ENCODE measurements at regions of chr19 and their contacts with region 1.

Region 1: DNA sequence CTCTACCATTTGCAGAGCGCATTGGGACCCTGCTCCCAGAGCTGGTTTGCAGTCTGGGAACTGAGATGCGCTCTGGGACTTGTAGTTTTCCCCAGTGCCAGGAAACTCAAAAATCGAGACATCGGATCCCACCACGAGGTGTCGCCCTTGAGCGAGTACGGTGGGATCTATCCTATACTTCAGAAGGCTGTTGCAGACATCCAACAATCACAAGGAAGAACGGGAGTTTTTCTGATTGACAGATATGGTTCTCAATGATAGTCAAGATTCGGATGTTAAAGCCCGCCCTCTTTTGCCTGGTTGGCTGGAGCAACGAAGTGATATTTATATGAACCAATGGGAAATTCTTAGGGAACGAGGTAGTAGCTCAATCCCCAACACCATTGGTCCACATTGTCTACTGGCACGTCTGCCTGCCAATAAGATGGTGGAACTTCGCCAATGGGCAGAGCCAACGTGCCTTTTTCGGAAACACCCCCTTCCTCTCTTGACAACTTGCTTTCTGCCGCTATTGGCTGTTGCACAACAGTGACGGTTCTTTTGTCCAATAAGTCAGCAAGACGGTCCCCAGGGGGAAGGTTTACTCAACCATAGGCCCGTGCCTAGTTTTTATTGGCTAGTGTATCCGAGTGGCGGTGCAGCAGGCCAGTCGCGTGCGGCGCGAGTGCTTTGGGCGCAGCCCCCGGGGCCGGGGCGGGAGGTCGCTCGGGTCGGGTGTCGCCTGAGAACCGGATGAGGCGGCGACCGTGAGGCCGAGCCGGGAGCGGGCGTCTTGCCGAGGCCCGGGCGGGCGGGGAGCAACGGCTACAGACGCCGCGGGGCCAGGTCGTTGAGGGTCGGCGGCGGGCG is at the start of gene DNM2:
- DNase-seq: peak; percentile 92 to 100 (median 97)
- ATAC-seq: peak; percentile 84
- H3K4me3 ChIP-seq: peak within 1 kb of the TSS; percentile 79 to 90
- H3K4me3 Mint-ChIP-seq: peak within 1 kb of the TSS; percentile 95
- H3K27ac ChIP-seq: peak within 1 kb of the TSS; percentile 71 to 81
- H3K27ac Mint-ChIP-seq: peak within 1 kb of the TSS; percentile 92
- H3K4me1 ChIP-seq: peaks cover 38% of the 10 kb centered on the region
- H3K4me1 Mint-ChIP-seq: peaks cover 42% of the 10 kb centered on the region
- H3K27me3 ChIP-seq: no peaks in the 10 kb centered on the region
- H3K27me3 Mint-ChIP-seq: no peaks in the 10 kb centered on the region
- CTCF ChIP-seq: peak; percentile 64
- total RNA-seq, gene DNM2: 309 to 337 TPM

Region 2: GRCh38 chr19:10653715-10654492 is 63.7 kb before region 1 on chr19 and contains the start of gene ILF3:
- CTCF ChIA-PET with region 1: no interaction called
- POLR2A ChIA-PET with region 1: interaction called, 3 read pairs
- intact Hi-C with region 1: loop called (anchors 1 kb)
- DNase-seq: peak; percentile 100
- ATAC-seq: peak; percentile 77
- H3K4me3 ChIP-seq: peak within 1 kb of the TSS; percentile 83
- H3K4me3 Mint-ChIP-seq: peak within 1 kb of the TSS; percentile 94
- H3K27ac ChIP-seq: peak within 1 kb of the TSS; percentile 98 to 99
- H3K27ac Mint-ChIP-seq: peak within 1 kb of the TSS; percentile 98
- H3K4me1 ChIP-seq: peaks cover 41% of the 10 kb centered on the region
- H3K4me1 Mint-ChIP-seq: peaks cover 44% of the 10 kb centered on the region
- H3K27me3 ChIP-seq: no peaks in the 10 kb centered on the region
- H3K27me3 Mint-ChIP-seq: no peaks in the 10 kb centered on the region
- CTCF ChIP-seq: no peak
- total RNA-seq, gene ILF3: 604 to 613 TPM

Region 3: DNA sequence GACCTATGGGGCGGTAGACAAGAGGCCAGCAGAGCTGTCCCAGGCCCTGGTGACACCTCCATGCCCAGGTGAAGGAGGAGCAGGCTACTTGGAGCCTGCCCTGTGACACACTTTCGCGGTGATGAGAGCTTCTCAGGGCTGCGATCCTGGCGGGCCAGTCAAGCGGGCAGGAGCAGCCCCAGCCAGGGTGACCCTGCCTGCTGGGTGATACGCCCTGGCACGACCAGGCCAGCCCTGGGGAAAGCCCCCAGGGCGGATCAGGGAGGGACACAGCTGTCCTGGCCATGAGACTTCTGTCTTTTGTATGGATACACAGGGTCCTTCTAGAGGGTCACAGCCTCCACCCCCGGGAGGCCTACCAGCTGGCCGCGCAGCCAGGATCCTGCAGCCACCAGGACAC is 13.3 kb after region 1 on chr19:
- CTCF ChIA-PET with region 1: interaction called, 22 read pairs
- POLR2A ChIA-PET with region 1: interaction called, 13 read pairs
- intact Hi-C with region 1: loop called (anchors 1 kb)
- DNase-seq: peak in 2 of 9 experiments; percentile 37 to 46
- ATAC-seq: no peak
- H3K4me3 ChIP-seq: no peak overlapping the region
- H3K4me3 Mint-ChIP-seq: peak overlapping the region; percentile 12
- H3K27ac ChIP-seq: peak overlapping the region; percentile 32 to 73
- H3K27ac Mint-ChIP-seq: peak overlapping the region; percentile 98
- H3K4me1 ChIP-seq: peaks cover 35% of the 10 kb centered on the region
- H3K4me1 Mint-ChIP-seq: peaks cover 56% of the 10 kb centered on the region
- H3K27me3 ChIP-seq: no peaks in the 10 kb centered on the region
- H3K27me3 Mint-ChIP-seq: no peaks in the 10 kb centered on the region
- CTCF ChIP-seq: no peak

Region 4: DNA sequence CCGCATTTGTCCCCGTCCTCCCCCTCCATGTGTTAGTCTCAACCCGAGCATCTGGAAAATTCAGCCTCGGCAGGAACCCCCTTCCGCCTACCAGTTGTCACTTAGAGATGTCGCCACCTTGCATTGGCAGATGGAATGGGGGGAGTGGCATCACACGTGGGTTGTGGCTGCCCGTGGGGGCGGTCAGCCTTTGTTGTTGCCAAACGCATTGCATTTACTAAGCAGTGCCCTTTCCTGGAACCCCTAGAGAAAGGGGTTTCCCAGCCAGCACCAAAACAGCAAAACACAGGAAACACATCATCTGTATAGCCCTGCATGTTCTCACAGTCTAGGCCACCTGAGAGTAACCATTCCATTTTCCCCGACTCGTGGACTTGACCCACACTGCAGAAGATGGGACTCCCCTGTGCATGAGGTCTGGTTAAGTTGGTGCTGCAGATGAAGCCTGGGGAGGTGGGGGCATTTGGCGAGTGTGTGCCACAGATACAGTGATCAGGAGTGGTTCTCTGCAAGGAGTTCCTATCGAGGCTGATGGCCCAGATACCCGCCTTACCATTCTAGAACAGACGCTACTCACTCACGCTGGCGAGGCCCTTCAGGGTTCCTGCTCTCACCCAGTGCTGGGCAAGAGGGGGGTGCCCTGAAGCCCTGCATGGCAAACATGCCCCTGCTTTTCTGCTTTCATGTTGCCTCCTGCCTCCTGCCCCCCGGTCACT is 80.1 kb after region 1 on chr19:
- CTCF ChIA-PET with region 1: interaction called, 6 read pairs
- POLR2A ChIA-PET with region 1: interaction called, 7 read pairs
- intact Hi-C with region 1: loop called (anchors 1 kb)
- DNase-seq: peak; percentile 64 to 97 (median 80)
- ATAC-seq: peak; percentile 81
- H3K4me3 ChIP-seq: peak overlapping the region; percentile 31 to 42
- H3K4me3 Mint-ChIP-seq: peak overlapping the region; percentile 76
- H3K27ac ChIP-seq: peak overlapping the region; percentile 81 to 96
- H3K27ac Mint-ChIP-seq: peak overlapping the region; percentile 98
- H3K4me1 ChIP-seq: peaks cover 35% of the 10 kb centered on the region
- H3K4me1 Mint-ChIP-seq: peaks cover 21% of the 10 kb centered on the region
- H3K27me3 ChIP-seq: no peaks in the 10 kb centered on the region
- H3K27me3 Mint-ChIP-seq: no peaks in the 10 kb centered on the region
- CTCF ChIP-seq: no peak

Region 5: GRCh38 chr19:10858204-10858828 is 140.7 kb after region 1 on chr19:
- CTCF ChIA-PET with region 1: interaction called, 64 read pairs
- POLR2A ChIA-PET with region 1: no interaction called
- intact Hi-C with region 1: loop called in 1 of 2 experiments (anchors 1 kb)
- DNase-seq: peak in 4 of 9 experiments; percentile 44 to 68 (median 52)
- ATAC-seq: peak; percentile 48
- H3K4me3 ChIP-seq: no peak overlapping the region
- H3K4me3 Mint-ChIP-seq: no peak overlapping the region
- H3K27ac ChIP-seq: no peak overlapping the region
- H3K27ac Mint-ChIP-seq: no peak overlapping the region
- H3K4me1 ChIP-seq: no peaks in the 10 kb centered on the region
- H3K4me1 Mint-ChIP-seq: peaks cover 3% of the 10 kb centered on the region
- H3K27me3 ChIP-seq: no peaks in the 10 kb centered on the region
- H3K27me3 Mint-ChIP-seq: no peaks in the 10 kb centered on the region
- CTCF ChIP-seq: peak; percentile 61

Region 6: GRCh38 chr19:11064831-11065303 is 347.3 kb after region 1 on chr19:
- CTCF ChIA-PET with region 1: no interaction called
- POLR2A ChIA-PET with region 1: no interaction called
- intact Hi-C with region 1: no loop called
- DNase-seq: no peak
- ATAC-seq: no peak
- H3K4me3 ChIP-seq: no peak overlapping the region
- H3K4me3 Mint-ChIP-seq: no peak overlapping the region
- H3K27ac ChIP-seq: no peak overlapping the region
- H3K27ac Mint-ChIP-seq: peak overlapping the region; percentile 22
- H3K4me1 ChIP-seq: no peaks in the 10 kb centered on the region
- H3K4me1 Mint-ChIP-seq: no peaks in the 10 kb centered on the region
- H3K27me3 ChIP-seq: no peaks in the 10 kb centered on the region
- H3K27me3 Mint-ChIP-seq: no peaks in the 10 kb centered on the region
- CTCF ChIP-seq: no peak

Region 7: DNA sequence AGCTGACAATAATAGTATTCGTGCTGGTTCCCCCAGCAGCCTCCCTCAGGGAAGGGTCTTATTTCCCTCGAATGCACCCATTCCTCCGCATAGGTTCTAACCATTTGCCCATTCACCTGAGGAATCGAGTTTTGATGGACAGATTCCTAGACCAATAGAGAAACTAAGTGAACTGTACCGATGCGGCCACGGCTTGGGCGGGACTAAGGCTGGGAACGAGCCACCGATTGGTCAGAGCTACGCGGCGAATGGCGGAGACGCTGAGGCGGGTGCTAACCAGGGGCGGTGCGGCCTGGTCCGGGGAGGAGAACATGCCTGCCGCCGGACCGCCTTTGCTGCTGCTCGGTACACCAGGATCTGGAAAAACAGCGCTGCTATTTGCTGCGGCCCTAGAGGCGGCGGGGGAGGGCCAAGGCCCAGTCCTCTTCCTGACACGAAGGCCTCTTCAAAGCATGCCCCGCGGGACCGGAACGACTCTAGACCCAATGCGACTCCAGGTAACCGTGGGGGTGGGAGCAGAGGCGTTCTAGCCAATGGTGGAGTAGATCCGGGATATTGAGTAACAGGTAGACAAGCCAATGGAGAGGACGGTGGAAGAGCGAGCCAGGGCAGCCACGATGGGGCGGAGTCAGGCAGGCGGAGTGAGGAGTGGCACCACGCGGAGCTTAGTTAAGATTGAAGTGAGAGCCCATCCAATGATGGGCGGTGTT is 657.0 kb after region 1 on chr19 and contains the start of gene SWSAP1:
- CTCF ChIA-PET with region 1: no interaction called
- POLR2A ChIA-PET with region 1: no interaction called
- intact Hi-C with region 1: loop called in 1 of 2 experiments (anchors 2 kb)
- DNase-seq: peak; percentile 91 to 100 (median 96)
- ATAC-seq: peak; percentile 88
- H3K4me3 ChIP-seq: peak within 1 kb of the TSS; percentile 73 to 80
- H3K4me3 Mint-ChIP-seq: no peak within 1 kb of the TSS
- H3K27ac ChIP-seq: peak within 1 kb of the TSS; percentile 83 to 98
- H3K27ac Mint-ChIP-seq: no peak within 1 kb of the TSS
- H3K4me1 ChIP-seq: peaks cover 28% of the 10 kb centered on the region
- H3K4me1 Mint-ChIP-seq: peaks cover 20% of the 10 kb centered on the region
- H3K27me3 ChIP-seq: no peaks in the 10 kb centered on the region
- H3K27me3 Mint-ChIP-seq: no peaks in the 10 kb centered on the region
- CTCF ChIP-seq: no peak
- total RNA-seq, gene SWSAP1: 2.2 to 2.4 TPM